CD8-positive, alpha-beta T cell (primary cell): ENCODE measurements at regions of chr10 and their contacts with region 1.

Region 1: GRCh38 chr10:12068449-12069269 is at the start of gene DHTKD1:
- DNase-seq: peak; percentile 97 to 99 (median 98)
- ATAC-seq: peak; percentile 98
- H3K4me3 ChIP-seq: peak within 1 kb of the TSS; percentile 82 to 89
- H3K4me3 Mint-ChIP-seq: peak within 1 kb of the TSS; percentile 88
- H3K27ac ChIP-seq: peak within 1 kb of the TSS; percentile 66 to 75
- H3K27ac Mint-ChIP-seq: peak within 1 kb of the TSS; percentile 96
- H3K4me1 ChIP-seq: peaks cover 7% of the 10 kb centered on the region
- H3K4me1 Mint-ChIP-seq: peaks cover 19% of the 10 kb centered on the region
- H3K27me3 ChIP-seq: no peaks in the 10 kb centered on the region
- H3K27me3 Mint-ChIP-seq: no peaks in the 10 kb centered on the region
- CTCF ChIP-seq: peak; percentile 31
- total RNA-seq, gene DHTKD1: 6.6 TPM

Region 2: GRCh38 chr10:12027539-12027938 is 41.1 kb before region 1 on chr10:
- CTCF ChIA-PET with region 1: no interaction called
- POLR2A ChIA-PET with region 1: no interaction called
- intact Hi-C with region 1: loop called (anchors 5 to 10 kb)
- DNase-seq: no peak
- ATAC-seq: no peak
- H3K4me3 ChIP-seq: no peak overlapping the region
- H3K4me3 Mint-ChIP-seq: no peak overlapping the region
- H3K27ac ChIP-seq: no peak overlapping the region
- H3K27ac Mint-ChIP-seq: no peak overlapping the region
- H3K4me1 ChIP-seq: peaks cover 10% of the 10 kb centered on the region
- H3K4me1 Mint-ChIP-seq: peaks cover 52% of the 10 kb centered on the region
- H3K27me3 ChIP-seq: no peaks in the 10 kb centered on the region
- H3K27me3 Mint-ChIP-seq: no peaks in the 10 kb centered on the region
- CTCF ChIP-seq: no peak

Region 3: DNA sequence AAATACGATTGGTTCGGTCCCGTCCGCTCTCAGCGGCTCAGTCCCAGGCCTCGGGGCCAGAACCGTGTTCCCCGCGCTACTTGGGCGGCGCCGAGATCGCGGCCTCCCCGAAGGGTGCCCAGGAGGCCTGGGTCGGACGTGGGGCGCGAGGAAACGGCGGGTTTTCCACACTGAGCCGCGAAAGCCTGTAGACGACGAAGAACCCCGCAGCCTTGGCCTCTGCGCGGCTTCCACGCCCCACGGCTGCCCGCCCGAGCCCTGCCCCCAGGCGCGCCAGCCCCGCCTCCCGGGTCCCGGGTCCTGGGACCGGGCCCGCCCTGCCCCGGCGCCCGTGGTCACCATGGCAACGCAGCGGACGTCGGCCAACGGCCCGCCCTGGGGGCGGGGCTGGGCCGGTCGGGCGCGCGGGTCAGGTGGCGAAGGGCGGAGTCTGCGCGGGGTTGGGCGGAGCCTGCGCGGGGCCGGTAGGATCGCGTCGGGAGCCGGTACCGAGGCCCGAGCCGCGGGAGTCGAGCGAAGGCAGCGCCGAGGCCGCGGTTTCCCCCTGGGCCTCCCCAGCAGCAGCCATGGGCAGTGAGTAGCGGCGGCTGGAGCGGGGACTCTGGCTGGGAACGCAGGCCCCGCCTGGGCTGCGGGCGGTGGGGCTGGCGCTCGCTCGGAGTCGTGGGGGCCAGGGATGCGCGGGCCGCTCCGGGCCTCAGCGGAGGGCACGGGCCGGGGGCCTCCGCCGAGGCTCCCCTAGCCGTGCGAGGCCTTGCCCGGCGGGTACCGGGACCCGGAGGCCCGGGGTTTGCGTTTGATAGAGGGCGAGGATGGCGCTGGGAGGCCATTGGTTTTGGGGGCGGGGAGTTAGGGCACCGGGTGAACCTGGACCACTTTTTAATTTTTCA is 60.8 kb after region 1 on chr10 and contains the start of gene SEC61A2:
- CTCF ChIA-PET with region 1: interaction called, 5 read pairs
- POLR2A ChIA-PET with region 1: no interaction called
- intact Hi-C with region 1: loop called (anchors 1 kb)
- DNase-seq: peak; percentile 92 to 99 (median 98)
- ATAC-seq: peak; percentile 89
- H3K4me3 ChIP-seq: peak within 1 kb of the TSS; percentile 61 to 78
- H3K4me3 Mint-ChIP-seq: peak within 1 kb of the TSS; percentile 90
- H3K27ac ChIP-seq: peak within 1 kb of the TSS; percentile 71 to 72
- H3K27ac Mint-ChIP-seq: peak within 1 kb of the TSS; percentile 90
- H3K4me1 ChIP-seq: peaks cover 9% of the 10 kb centered on the region
- H3K4me1 Mint-ChIP-seq: peaks cover 17% of the 10 kb centered on the region
- H3K27me3 ChIP-seq: no peaks in the 10 kb centered on the region
- H3K27me3 Mint-ChIP-seq: no peaks in the 10 kb centered on the region
- CTCF ChIP-seq: no peak
- total RNA-seq, gene SEC61A2: 10.2 to 14.5 TPM

Region 4: DNA sequence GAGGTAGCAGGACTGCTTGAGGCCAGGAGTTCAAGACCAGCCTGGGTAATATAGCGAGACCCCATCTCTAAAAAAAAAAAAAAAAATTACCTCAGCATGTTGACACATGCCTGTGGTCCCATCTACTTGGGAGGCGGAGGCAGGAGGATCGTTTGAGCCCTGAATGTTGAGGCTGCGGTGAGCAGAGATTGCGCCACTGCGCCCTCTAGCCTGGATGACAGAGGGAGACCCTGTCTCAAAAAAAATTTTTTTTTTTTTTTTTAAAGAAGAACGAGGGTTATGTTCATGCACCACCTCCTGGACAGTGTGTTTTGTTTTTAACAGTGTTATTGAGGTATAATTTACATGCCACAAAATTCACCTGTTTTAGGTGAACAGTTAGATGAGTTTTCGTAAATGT is 1330.6 kb after region 1 on chr10:
- CTCF ChIA-PET with region 1: no interaction called
- POLR2A ChIA-PET with region 1: no interaction called
- intact Hi-C with region 1: no loop called
- DNase-seq: peak in 1 of 9 experiments; percentile 5
- ATAC-seq: no peak
- H3K4me3 ChIP-seq: no peak overlapping the region
- H3K4me3 Mint-ChIP-seq: no peak overlapping the region
- H3K27ac ChIP-seq: no peak overlapping the region
- H3K27ac Mint-ChIP-seq: no peak overlapping the region
- H3K4me1 ChIP-seq: no peaks in the 10 kb centered on the region
- H3K4me1 Mint-ChIP-seq: no peaks in the 10 kb centered on the region
- H3K27me3 ChIP-seq: no peaks in the 10 kb centered on the region
- H3K27me3 Mint-ChIP-seq: peaks cover 6% of the 10 kb centered on the region
- CTCF ChIP-seq: no peak